PC-3 (cell line): ENCODE measurements at regions of chr15 and their contacts with region 1.

Region 1: GRCh38 chr15:79989682-79990081 is 18.7 kb upstream of the BCL2A1 start:
- DNase-seq: no peak
- ATAC-seq: no peak
- H3K4me3 ChIP-seq: no peak overlapping the region
- H3K27ac ChIP-seq: no peak overlapping the region
- H3K4me1 ChIP-seq: peaks cover 4% of the 10 kb centered on the region
- H3K27me3 ChIP-seq: no peaks in the 10 kb centered on the region
- CTCF ChIP-seq: no peak

Region 2: DNA sequence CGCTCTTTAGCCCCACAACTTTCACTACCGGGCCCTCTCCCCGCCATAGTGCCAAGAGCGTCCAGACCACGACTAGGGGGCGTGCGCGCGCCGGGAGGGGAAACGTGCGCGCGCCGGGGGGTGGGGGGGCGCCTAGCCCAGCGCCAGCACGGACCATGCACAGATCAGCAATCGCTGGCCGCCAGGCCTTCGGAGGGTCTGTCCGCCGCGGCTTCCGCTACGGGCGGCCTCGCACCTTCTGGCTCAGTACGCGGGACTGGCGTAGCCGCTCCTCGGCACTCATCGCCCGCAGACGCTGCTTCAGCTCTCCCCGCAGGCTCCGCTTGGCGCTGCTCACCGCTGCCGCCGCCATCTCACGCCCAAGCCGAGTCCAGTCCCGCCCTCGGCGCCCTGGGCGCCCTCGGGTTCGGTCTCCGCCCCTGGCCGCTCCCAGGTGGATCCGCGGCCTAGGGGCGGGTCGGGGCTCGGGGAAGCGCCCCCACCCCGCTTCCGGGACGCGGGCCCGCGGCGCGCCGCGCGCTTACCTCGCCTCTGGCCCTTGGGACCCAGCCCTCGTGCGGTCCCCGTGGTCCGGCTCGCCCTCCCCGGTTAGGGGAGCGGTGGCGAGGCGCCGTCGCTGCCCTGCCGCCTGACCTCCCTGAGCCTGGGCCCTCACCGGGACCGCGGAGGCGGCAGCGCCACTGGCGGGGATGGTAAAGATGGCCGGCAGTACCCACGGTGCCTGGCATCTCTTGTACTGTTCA is 92.9 kb before region 1 on chr15 and contains the start of gene MTHFS:
- CTCF ChIA-PET with region 1: no interaction called
- POLR2A ChIA-PET with region 1: no interaction called
- intact Hi-C with region 1: loop called (anchors 2 kb)
- DNase-seq: peak; percentile 86
- ATAC-seq: peak; percentile 95
- H3K4me3 ChIP-seq: peak within 1 kb of the TSS; percentile 74
- H3K27ac ChIP-seq: peak within 1 kb of the TSS; percentile 65
- H3K4me1 ChIP-seq: peaks cover 24% of the 10 kb centered on the region
- H3K27me3 ChIP-seq: no peaks in the 10 kb centered on the region
- CTCF ChIP-seq: peak; percentile 52
- total RNA-seq, gene MTHFS: 28.8 and 53.1 TPM in 2 replicates

Region 3: DNA sequence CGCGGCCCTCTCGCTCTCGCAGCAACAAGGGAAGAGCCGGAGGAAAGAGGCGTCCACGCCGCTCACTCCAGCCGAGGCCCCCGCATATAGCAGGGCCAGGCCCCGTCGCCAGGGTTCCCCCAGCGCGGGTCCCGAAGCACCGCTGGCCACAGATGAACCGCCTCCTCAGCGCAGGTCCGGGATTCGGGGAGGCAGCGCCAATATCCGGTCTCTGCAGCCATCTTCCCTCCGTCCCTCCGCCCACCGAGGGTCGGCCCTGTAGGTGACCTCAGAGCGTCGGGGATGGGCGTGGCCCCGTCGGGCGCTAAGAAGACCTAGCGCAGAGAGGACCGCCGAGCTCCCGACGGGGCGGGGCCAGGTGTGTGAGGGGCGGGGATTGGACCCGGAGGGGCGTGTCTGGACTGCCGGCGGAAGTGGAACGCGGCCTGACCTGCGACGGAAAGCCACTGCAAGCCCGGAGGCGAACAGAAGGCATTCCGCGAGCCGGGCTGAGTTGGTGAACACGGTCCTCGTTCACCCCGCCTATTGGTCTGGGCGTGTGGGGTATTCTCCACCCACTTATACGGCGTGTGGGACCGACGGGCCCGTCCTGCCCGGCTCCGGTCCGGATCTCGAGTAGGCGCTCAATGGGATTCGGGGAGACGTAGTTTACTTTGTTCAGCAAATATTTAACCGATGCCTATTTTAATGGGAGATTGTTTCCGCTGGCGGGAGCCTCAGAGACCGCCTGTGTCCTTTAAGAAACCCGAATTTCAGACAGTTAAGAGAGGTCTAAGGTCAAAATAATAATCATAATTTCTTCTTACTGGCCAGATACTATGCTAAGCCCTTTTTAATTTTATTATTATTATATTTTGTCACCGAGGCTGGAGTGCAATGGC is 65.9 kb before region 1 on chr15:
- CTCF ChIA-PET with region 1: no interaction called
- POLR2A ChIA-PET with region 1: no interaction called
- intact Hi-C with region 1: loop called (anchors 2 kb)
- DNase-seq: peak; percentile 98
- ATAC-seq: peak; percentile 94
- H3K4me3 ChIP-seq: peak overlapping the region; percentile 100
- H3K27ac ChIP-seq: peak overlapping the region; percentile 87
- H3K4me1 ChIP-seq: peaks cover 4% of the 10 kb centered on the region; the same call in 1 of the 2 replicates
- H3K27me3 ChIP-seq: no peaks in the 10 kb centered on the region
- CTCF ChIP-seq: no peak